Transverse colon (tissue), 4 donors: ENCODE measurements at regions of chr10 and their contacts with region 1.

Region 1: GRCh38 chr10:123772645-123773508 is 106.7 kb downstream of the GPR26 start:
- DNase-seq: no peak
- H3K4me3 ChIP-seq: no peak overlapping the region
- H3K27ac ChIP-seq: no peak overlapping the region
- H3K4me1 ChIP-seq: peaks cover 0 to 9% (median 3%) of the 10 kb centered on the region in 4 donors
- H3K27me3 ChIP-seq: no peaks in the 10 kb centered on the region
- CTCF ChIP-seq: no peak
- EP300 ChIP-seq: no peak
- POLR2A ChIP-seq: no peak

Region 2: DNA sequence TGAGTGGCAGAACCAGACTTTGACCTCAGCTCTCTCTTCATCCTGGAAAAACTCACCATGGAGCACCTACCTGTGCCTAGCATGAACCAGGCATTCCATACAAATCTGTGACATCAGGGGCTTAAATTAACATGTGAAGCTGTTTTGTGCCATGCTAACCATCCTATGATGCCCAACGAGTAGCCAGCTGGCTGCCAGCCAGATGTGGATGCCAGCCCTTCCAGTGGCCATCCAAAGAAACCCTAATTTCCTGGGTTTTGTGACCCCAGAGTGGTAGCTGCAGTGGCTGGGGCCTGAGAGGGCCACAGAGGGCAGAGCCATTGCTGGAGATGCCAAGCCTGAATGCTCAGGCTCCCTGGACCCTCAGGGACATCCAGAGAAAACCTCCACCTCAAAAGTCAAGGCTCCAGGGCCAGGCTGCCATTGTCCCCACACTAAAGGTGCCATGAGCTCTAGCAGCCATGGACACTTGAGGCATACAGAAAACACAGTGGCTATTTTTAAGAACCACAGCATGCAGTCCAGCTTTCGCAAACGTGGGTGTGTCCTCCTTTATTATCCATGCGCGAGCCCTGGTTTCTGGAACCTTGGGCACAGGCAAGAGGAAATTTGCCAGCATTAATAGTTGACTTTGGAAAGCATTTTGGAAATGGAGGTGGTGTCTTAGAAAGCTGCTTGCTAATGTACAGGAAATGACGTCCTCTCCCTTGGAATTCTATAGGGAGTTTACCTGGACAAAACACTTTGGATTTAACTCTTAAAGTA is 112.7 kb after region 1 on chr10:
- in situ Hi-C with region 1: no loop called
- intact Hi-C with region 1: loop called (anchors 5 kb)
- DNase-seq: no peak
- H3K4me3 ChIP-seq: no peak overlapping the region
- H3K27ac ChIP-seq: peak overlapping the region; percentile 20 to 53 (median 42)
- H3K4me1 ChIP-seq: peaks cover 0 to 13% (median 4%) of the 10 kb centered on the region in 4 donors
- H3K27me3 ChIP-seq: peaks cover 1% of the 10 kb centered on the region
- CTCF ChIP-seq: no peak
- EP300 ChIP-seq: no peak
- POLR2A ChIP-seq: no peak

Region 3: GRCh38 chr10:123994417-123995081 is 221.7 kb after region 1 on chr10:
- in situ Hi-C with region 1: no loop called
- intact Hi-C with region 1: no loop called
- DNase-seq: peak; percentile 90
- H3K4me3 ChIP-seq: peak overlapping the region in 2 of 4 donors; percentile 3 to 5
- H3K27ac ChIP-seq: peak overlapping the region in 2 of 4 donors; percentile 41 to 64
- H3K4me1 ChIP-seq: peaks cover 15 to 27% (median 18%) of the 10 kb centered on the region in 4 donors
- H3K27me3 ChIP-seq: peaks cover 55% of the 10 kb centered on the region
- CTCF ChIP-seq: peak; percentile 99
- EP300 ChIP-seq: no peak
- POLR2A ChIP-seq: no peak

Region 4: DNA sequence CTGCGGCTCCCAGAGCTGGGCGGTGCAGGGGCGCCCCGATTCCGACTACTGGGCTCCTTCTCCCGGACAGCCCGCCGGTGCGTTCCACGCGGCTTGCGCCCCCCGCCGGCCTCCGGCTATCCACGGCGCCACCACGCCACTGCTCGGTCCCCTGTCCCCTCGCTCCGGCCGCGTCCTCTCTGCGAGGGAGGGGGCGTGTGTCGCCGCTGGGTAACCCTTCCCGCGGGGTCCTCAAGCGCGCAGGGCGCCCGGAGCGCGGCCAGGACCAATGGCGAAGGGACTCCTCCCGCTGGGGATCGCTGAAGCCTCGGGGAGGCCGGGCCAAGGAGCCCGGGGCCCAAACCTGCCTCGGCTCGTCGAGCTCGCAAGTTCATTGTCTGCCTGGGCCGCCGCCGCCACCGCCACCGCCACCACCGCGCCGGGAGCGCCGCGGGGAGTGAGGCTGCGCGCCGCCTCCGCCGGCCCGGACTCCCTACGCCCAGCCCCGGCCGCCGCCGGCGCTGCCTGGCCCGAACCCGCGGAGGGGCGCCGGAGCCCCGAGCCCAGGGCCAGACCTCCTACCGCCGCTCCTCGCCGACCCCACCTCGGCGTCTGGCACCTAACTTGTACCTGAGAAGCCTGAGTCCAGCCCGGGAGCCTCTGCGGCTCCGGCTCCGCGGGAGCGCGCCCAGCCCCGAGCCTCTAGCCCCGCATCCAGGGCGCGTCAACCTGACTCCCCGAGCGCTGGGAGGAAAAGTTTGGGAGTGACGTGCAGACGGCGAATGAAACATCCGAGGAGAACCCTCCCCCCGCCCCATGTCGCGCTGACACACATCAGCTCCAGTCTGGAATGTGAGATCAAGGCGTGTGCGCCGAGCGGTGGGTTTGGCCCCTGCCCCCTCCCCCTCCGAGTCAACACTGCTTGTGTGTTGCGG is 320.2 kb after region 1 on chr10 and contains the start of gene CHST15:
- in situ Hi-C with region 1: no loop called
- intact Hi-C with region 1: no loop called
- DNase-seq: peak; percentile 46
- H3K4me3 ChIP-seq: peak within 1 kb of the TSS; percentile 47 to 70 (median 56)
- H3K27ac ChIP-seq: peak within 1 kb of the TSS; percentile 87 to 94 (median 89)
- H3K4me1 ChIP-seq: peaks cover 7 to 56% (median 31%) of the 10 kb centered on the region in 4 donors
- H3K27me3 ChIP-seq: peaks cover 71% of the 10 kb centered on the region
- CTCF ChIP-seq: peak in 1 of 5 experiments; percentile 8
- EP300 ChIP-seq: no peak
- POLR2A ChIP-seq: peak; percentile 57
- total RNA-seq, gene CHST15: 10.0 to 25.4 (median 16.0) TPM